CD8-positive, alpha-beta T cell (primary cell): ENCODE measurements at regions of chr5 and their contacts with region 1.

Region 1: GRCh38 chr5:64768358-64769312 is at the starts of genes CWC27 and SREK1IP1:
- DNase-seq: peak; percentile 63 to 92 (median 80)
- ATAC-seq: peak; percentile 96
- H3K4me3 ChIP-seq: peak within 1 kb of the TSS; percentile 78 to 93
- H3K4me3 Mint-ChIP-seq: peak within 1 kb of the TSS; percentile 100
- H3K27ac ChIP-seq: peak within 1 kb of the TSS; percentile 85 to 90
- H3K27ac Mint-ChIP-seq: peak within 1 kb of the TSS; percentile 97
- H3K4me1 ChIP-seq: peaks cover 39% of the 10 kb centered on the region
- H3K4me1 Mint-ChIP-seq: peaks cover 66% of the 10 kb centered on the region
- H3K27me3 ChIP-seq: no peaks in the 10 kb centered on the region
- H3K27me3 Mint-ChIP-seq: no peaks in the 10 kb centered on the region
- CTCF ChIP-seq: no peak
- total RNA-seq, gene CWC27: 15.5 to 16.6 TPM
- total RNA-seq, gene SREK1IP1: 20.4 to 26.5 TPM

Region 2: DNA sequence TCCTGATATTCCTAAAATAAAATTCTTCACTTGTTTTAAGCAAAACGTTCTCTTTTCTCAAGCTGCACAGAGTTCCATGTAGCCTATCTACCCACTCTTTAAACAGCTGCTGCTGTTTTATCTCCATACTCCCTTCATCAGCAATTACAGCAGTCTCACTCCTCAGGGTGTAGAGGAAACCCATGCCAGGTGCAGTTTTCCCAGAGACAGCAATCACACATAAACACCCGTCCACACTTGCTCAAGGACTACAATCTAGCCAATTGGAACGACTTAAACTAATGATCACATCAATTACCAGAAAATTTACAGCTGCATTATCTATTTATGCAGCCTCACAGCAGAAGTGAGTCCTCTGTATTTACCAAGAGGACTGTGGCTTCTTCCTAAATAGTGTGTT is 948.1 kb before region 1 on chr5:
- CTCF ChIA-PET with region 1: no interaction called
- POLR2A ChIA-PET with region 1: no interaction called
- intact Hi-C with region 1: no loop called
- DNase-seq: no peak
- ATAC-seq: no peak
- H3K4me3 ChIP-seq: no peak overlapping the region
- H3K4me3 Mint-ChIP-seq: no peak overlapping the region
- H3K27ac ChIP-seq: no peak overlapping the region
- H3K27ac Mint-ChIP-seq: no peak overlapping the region
- H3K4me1 ChIP-seq: no peaks in the 10 kb centered on the region
- H3K4me1 Mint-ChIP-seq: no peaks in the 10 kb centered on the region
- H3K27me3 ChIP-seq: no peaks in the 10 kb centered on the region
- H3K27me3 Mint-ChIP-seq: no peaks in the 10 kb centered on the region
- CTCF ChIP-seq: no peak

Region 3: DNA sequence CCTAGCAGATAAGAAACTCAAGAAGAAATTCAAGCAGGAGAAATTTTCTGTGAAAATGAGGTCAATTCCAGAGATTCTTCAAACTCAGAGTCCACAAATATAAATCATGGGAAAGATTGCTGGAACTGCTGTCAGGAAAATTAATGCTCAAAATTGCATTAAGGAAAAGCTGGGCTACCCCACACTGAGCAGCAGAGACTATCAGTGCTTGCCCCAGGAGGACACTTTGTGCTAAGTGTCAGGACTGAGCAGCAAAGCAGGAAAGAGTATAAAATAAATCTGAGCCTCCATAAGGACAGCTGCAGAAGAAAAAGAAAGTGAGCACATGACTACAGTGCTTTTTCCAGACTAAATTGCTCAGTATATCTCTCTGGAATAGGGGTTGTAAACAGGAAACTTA is 181.3 kb before region 1 on chr5:
- CTCF ChIA-PET with region 1: no interaction called
- POLR2A ChIA-PET with region 1: no interaction called
- intact Hi-C with region 1: no loop called
- DNase-seq: no peak
- ATAC-seq: no peak
- H3K4me3 ChIP-seq: no peak overlapping the region
- H3K4me3 Mint-ChIP-seq: no peak overlapping the region
- H3K27ac ChIP-seq: no peak overlapping the region
- H3K27ac Mint-ChIP-seq: no peak overlapping the region
- H3K4me1 ChIP-seq: no peaks in the 10 kb centered on the region
- H3K4me1 Mint-ChIP-seq: no peaks in the 10 kb centered on the region
- H3K27me3 ChIP-seq: no peaks in the 10 kb centered on the region
- H3K27me3 Mint-ChIP-seq: peaks cover 25% of the 10 kb centered on the region
- CTCF ChIP-seq: no peak

Region 4: DNA sequence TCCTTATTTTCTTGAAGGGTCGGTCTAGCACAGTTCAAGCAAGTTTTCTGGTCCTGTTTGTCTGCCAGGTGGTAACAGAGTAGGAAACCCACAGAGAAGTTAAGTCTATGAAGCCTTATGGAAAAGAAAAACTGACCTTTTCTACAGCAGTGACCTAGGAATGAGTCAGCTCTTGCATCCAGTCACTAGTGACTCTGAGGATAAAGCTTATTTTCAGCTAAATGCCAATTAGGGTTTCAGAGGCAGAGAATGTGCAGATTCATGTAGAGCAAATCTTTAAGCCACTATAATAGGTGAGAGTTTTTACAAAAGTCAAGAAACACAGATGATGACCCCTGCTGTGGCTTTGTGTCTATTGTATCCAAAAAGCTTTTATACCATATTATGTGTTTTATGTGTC is 100.8 kb after region 1 on chr5:
- CTCF ChIA-PET with region 1: no interaction called
- POLR2A ChIA-PET with region 1: no interaction called
- intact Hi-C with region 1: no loop called
- DNase-seq: no peak
- ATAC-seq: no peak
- H3K4me3 ChIP-seq: no peak overlapping the region
- H3K4me3 Mint-ChIP-seq: no peak overlapping the region
- H3K27ac ChIP-seq: no peak overlapping the region
- H3K27ac Mint-ChIP-seq: no peak overlapping the region
- H3K4me1 ChIP-seq: no peaks in the 10 kb centered on the region
- H3K4me1 Mint-ChIP-seq: no peaks in the 10 kb centered on the region
- H3K27me3 ChIP-seq: no peaks in the 10 kb centered on the region
- H3K27me3 Mint-ChIP-seq: no peaks in the 10 kb centered on the region
- CTCF ChIP-seq: no peak

Region 5: GRCh38 chr5:65035211-65036206 is 266.9 kb after region 1 on chr5:
- CTCF ChIA-PET with region 1: no interaction called
- POLR2A ChIA-PET with region 1: interaction called, 5 read pairs
- intact Hi-C with region 1: loop called (anchors 1 to 5 kb)
- DNase-seq: peak; percentile 62 to 95 (median 83)
- ATAC-seq: peak; percentile 76
- H3K4me3 ChIP-seq: peak overlapping the region; percentile 57 to 60
- H3K4me3 Mint-ChIP-seq: peak overlapping the region; percentile 95
- H3K27ac ChIP-seq: peak overlapping the region; percentile 83 to 96
- H3K27ac Mint-ChIP-seq: peak overlapping the region; percentile 89
- H3K4me1 ChIP-seq: peaks cover 20% of the 10 kb centered on the region
- H3K4me1 Mint-ChIP-seq: peaks cover 32% of the 10 kb centered on the region
- H3K27me3 ChIP-seq: no peaks in the 10 kb centered on the region
- H3K27me3 Mint-ChIP-seq: no peaks in the 10 kb centered on the region
- CTCF ChIP-seq: no peak

Region 6: GRCh38 chr5:65562731-65563701 is 794.4 kb after region 1 on chr5 and contains the starts of genes CENPK and PPWD1:
- CTCF ChIA-PET with region 1: no interaction called
- POLR2A ChIA-PET with region 1: interaction called, 3 read pairs
- intact Hi-C with region 1: loop called (anchors 1 to 5 kb)
- DNase-seq: peak; percentile 83 to 98 (median 95)
- ATAC-seq: peak; percentile 97
- H3K4me3 ChIP-seq: peak within 1 kb of the TSS; percentile 74 to 82
- H3K4me3 Mint-ChIP-seq: peak within 1 kb of the TSS; percentile 100
- H3K27ac ChIP-seq: peak within 1 kb of the TSS; percentile 97 to 98
- H3K27ac Mint-ChIP-seq: peak within 1 kb of the TSS; percentile 100
- H3K4me1 ChIP-seq: peaks cover 37% of the 10 kb centered on the region
- H3K4me1 Mint-ChIP-seq: peaks cover 42% of the 10 kb centered on the region
- H3K27me3 ChIP-seq: no peaks in the 10 kb centered on the region
- H3K27me3 Mint-ChIP-seq: no peaks in the 10 kb centered on the region
- CTCF ChIP-seq: no peak
- total RNA-seq, gene CENPK: 5.1 to 5.3 TPM
- total RNA-seq, gene PPWD1: 78.8 to 81.5 TPM

Region 7: DNA sequence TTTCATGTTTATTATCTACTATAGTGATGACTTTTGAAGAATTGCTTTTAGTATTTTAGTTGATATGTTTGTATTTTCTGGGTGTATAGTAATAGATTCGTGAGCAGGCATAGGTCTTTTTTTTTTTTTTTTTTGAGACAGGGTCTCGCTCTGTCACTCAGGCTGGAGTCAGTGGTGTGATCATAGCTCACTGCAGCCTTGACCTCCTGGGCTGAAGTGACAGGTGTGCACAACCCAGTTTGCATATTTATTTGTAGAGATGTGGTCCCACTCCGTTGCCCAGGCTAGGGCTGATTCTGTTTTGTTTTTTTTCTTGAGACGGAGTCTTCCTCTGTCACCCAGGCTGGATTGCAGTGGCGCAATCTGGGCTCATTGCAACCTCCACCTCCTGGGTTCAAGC is 1169.6 kb after region 1 on chr5:
- CTCF ChIA-PET with region 1: no interaction called
- POLR2A ChIA-PET with region 1: no interaction called
- intact Hi-C with region 1: loop called in 1 of 2 experiments (anchors 10 kb)
- DNase-seq: no peak
- ATAC-seq: no peak
- H3K4me3 ChIP-seq: no peak overlapping the region
- H3K4me3 Mint-ChIP-seq: no peak overlapping the region
- H3K27ac ChIP-seq: no peak overlapping the region
- H3K27ac Mint-ChIP-seq: peak overlapping the region; percentile 49
- H3K4me1 ChIP-seq: peaks cover 32% of the 10 kb centered on the region
- H3K4me1 Mint-ChIP-seq: peaks cover 58% of the 10 kb centered on the region
- H3K27me3 ChIP-seq: no peaks in the 10 kb centered on the region
- H3K27me3 Mint-ChIP-seq: no peaks in the 10 kb centered on the region
- CTCF ChIP-seq: no peak